ENCODE measurements at regions of chr5 and their contacts with region 1.

Region 1: DNA sequence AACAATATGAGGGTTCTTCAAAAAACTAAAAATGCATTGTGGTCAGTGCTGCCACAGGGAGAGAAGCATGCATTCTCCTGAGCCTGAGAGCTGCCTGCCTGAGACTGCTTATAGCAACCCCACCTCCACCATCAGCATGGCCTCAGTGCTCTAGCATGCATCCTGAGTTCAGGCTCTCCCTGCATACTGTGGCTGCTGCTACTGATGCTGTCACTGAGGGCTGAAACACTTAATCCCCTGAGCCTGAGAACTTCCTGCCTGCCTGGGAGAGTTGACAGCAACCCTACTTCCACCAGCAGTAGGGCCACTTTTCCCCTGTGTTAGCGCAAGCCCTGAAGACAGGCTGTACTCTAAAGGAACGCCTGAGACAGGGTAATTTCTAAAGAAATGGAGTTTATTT is 206.0 kb downstream of the FBXO4 start:
- DNase-seq: no peak
- H3K4me3 ChIP-seq: no peak overlapping the region
- H3K27ac ChIP-seq: no peak overlapping the region
- H3K4me1 ChIP-seq: no peaks in the 10 kb centered on the region
- H3K27me3 ChIP-seq: no peaks in the 10 kb centered on the region
- CTCF ChIP-seq: no peak
- POLR2A ChIP-seq: no peak

Region 2: GRCh38 chr5:42143361-42143760 is 12.3 kb after region 1 on chr5:
- intact Hi-C with region 1: loop called (anchors 1 kb)
- DNase-seq: no peak
- H3K4me3 ChIP-seq: no peak overlapping the region
- H3K27ac ChIP-seq: no peak overlapping the region
- H3K4me1 ChIP-seq: no peaks in the 10 kb centered on the region
- H3K27me3 ChIP-seq: no peaks in the 10 kb centered on the region
- CTCF ChIP-seq: no peak
- POLR2A ChIP-seq: no peak

Region 3: GRCh38 chr5:42216904-42217303 is 85.8 kb after region 1 on chr5:
- intact Hi-C with region 1: no loop called
- DNase-seq: no peak
- H3K4me3 ChIP-seq: no peak overlapping the region
- H3K27ac ChIP-seq: no peak overlapping the region
- H3K4me1 ChIP-seq: no peaks in the 10 kb centered on the region
- H3K27me3 ChIP-seq: no peaks in the 10 kb centered on the region
- CTCF ChIP-seq: no peak
- POLR2A ChIP-seq: no peak

Measured in vagina (tissue), 2 donors.